K562 (cell line): ENCODE measurements at regions of chr5 and their contacts with region 1.

Region 1: DNA sequence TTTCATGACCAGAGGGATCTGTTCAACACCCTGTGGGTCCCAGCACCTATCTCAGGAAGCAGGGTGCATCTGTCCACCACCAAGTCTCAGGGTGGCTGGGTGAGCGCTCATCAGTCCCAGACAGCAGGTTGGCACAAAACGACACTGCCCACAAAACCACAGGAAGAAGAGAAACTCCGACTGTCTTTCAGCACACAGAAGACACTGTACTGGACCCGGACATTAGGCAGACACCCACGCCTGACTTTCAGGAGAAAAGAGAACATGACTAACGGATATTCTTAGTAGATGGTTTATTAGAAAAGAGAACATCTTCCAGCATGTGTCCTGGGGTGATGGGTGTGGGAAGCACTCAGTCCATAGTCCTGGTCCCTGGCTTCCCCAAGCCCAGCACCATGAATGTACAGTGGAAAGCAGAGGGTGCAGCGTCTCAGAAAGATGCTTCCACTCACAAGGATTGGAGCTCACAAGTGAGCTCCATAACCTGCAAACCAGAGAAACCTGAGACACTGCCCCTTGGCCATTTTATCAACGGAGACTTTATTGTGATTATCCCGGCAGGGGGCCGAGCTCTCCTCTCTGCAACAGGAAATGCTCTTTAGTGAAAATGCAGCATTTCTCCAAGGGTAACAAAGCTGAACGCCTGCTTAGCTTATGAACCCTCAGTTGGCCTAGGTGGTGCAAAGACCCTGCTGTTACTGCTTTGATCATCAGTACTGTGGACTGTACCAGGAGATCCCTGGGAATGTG is 35.8 kb upstream of the LCP2 start:
- DNase-seq: peak in 1 of 4 experiments; percentile 47
- ATAC-seq: no peak
- H3K4me3 ChIP-seq: no peak overlapping the region
- H3K27ac ChIP-seq: peak overlapping the region; percentile 17; the same call in 2 of the 3 replicates
- H3K4me1 ChIP-seq: peaks cover 7 to 48% of the 10 kb centered on the region in 2 experiments; a peak in 4 of 5 replicates
- H3K27me3 ChIP-seq: no peaks in the 10 kb centered on the region
- CTCF ChIP-seq: no peak
- EP300 ChIP-seq: no peak
- POLR2A ChIP-seq: no peak
- RAD21 ChIP-seq: no peak

Region 2: GRCh38 chr5:169980418-169981053 is 352.8 kb before region 1 on chr5 and contains the start of gene INSYN2B:
- CTCF ChIA-PET with region 1: no interaction called
- POLR2A ChIA-PET with region 1: no interaction called
- in situ Hi-C with region 1: no loop called
- intact Hi-C with region 1: no loop called
- DNase-seq: peak; percentile 65 to 71 (median 68)
- ATAC-seq: peak; percentile 97
- H3K4me3 ChIP-seq: no peak within 1 kb of the TSS
- H3K27ac ChIP-seq: no peak within 1 kb of the TSS
- H3K4me1 ChIP-seq: no peaks in the 10 kb centered on the region; a peak in 1 of 5 replicates
- H3K27me3 ChIP-seq: no peaks in the 10 kb centered on the region; a peak in 1 of 5 replicates
- CTCF ChIP-seq: peak; percentile 67 to 98 (median 84)
- EP300 ChIP-seq: no peak
- POLR2A ChIP-seq: no peak
- RAD21 ChIP-seq: peak; percentile 42 to 75
- polyA plus RNA-seq, gene INSYN2B: not detected

Region 3: GRCh38 chr5:170145462-170145861 is 187.9 kb before region 1 on chr5:
- CTCF ChIA-PET with region 1: no interaction called
- POLR2A ChIA-PET with region 1: no interaction called
- in situ Hi-C with region 1: no loop called
- intact Hi-C with region 1: no loop called
- DNase-seq: peak; percentile 28 to 59 (median 45)
- ATAC-seq: peak; percentile 59; the same call in 2 of the 3 replicates
- H3K4me3 ChIP-seq: no peak overlapping the region
- H3K27ac ChIP-seq: no peak overlapping the region
- H3K4me1 ChIP-seq: peaks cover 0 to 3% of the 10 kb centered on the region in 2 experiments; a peak in 3 of 5 replicates
- H3K27me3 ChIP-seq: peaks cover 4 to 49% of the 10 kb centered on the region in 2 experiments
- CTCF ChIP-seq: no peak
- EP300 ChIP-seq: no peak
- POLR2A ChIP-seq: no peak
- RAD21 ChIP-seq: no peak

Region 4: GRCh38 chr5:170297589-170298462 is 35.5 kb before region 1 on chr5 and contains the start of gene LCP2:
- CTCF ChIA-PET with region 1: no interaction called
- POLR2A ChIA-PET with region 1: no interaction called
- in situ Hi-C with region 1: no loop called
- intact Hi-C with region 1: loop called (anchors 5 kb)
- DNase-seq: no peak
- ATAC-seq: peak; percentile 49
- H3K4me3 ChIP-seq: peak within 1 kb of the TSS; percentile 51
- H3K27ac ChIP-seq: peak within 1 kb of the TSS; percentile 78
- H3K4me1 ChIP-seq: peaks cover 7 to 38% of the 10 kb centered on the region in 2 experiments
- H3K27me3 ChIP-seq: no peaks in the 10 kb centered on the region
- CTCF ChIP-seq: no peak
- EP300 ChIP-seq: no peak
- POLR2A ChIP-seq: no peak
- RAD21 ChIP-seq: no peak
- polyA plus RNA-seq, gene LCP2: 4.0 to 5.2 TPM

Region 5: GRCh38 chr5:170306381-170306831 is 26.9 kb before region 1 on chr5:
- CTCF ChIA-PET with region 1: no interaction called
- POLR2A ChIA-PET with region 1: interaction called, 4 read pairs
- in situ Hi-C with region 1: no loop called
- intact Hi-C with region 1: loop called (anchors 1 kb)
- DNase-seq: peak; percentile 70 to 86 (median 78)
- ATAC-seq: peak; percentile 76
- H3K4me3 ChIP-seq: no peak overlapping the region
- H3K27ac ChIP-seq: peak overlapping the region; percentile 65
- H3K4me1 ChIP-seq: peaks cover 5 to 63% of the 10 kb centered on the region in 2 experiments
- H3K27me3 ChIP-seq: no peaks in the 10 kb centered on the region
- CTCF ChIP-seq: no peak
- EP300 ChIP-seq: peak; percentile 90
- POLR2A ChIP-seq: no peak; the same call in 1 of the 2 replicates
- RAD21 ChIP-seq: peak in 1 of 2 experiments; percentile 29; a peak in 1 of 4 replicates

Region 6: GRCh38 chr5:170319301-170319700 is 14.0 kb before region 1 on chr5:
- CTCF ChIA-PET with region 1: no interaction called
- POLR2A ChIA-PET with region 1: no interaction called
- in situ Hi-C with region 1: no loop called
- intact Hi-C with region 1: no loop called
- DNase-seq: no peak
- ATAC-seq: no peak
- H3K4me3 ChIP-seq: no peak overlapping the region
- H3K27ac ChIP-seq: no peak overlapping the region
- H3K4me1 ChIP-seq: peaks cover 0 to 19% of the 10 kb centered on the region in 2 experiments; a peak in 2 of 5 replicates
- H3K27me3 ChIP-seq: no peaks in the 10 kb centered on the region
- CTCF ChIP-seq: no peak
- EP300 ChIP-seq: no peak
- POLR2A ChIP-seq: no peak
- RAD21 ChIP-seq: no peak